HEK293 (cell line): ENCODE measurements at regions of chrX and their contacts with region 1.

Region 1: DNA sequence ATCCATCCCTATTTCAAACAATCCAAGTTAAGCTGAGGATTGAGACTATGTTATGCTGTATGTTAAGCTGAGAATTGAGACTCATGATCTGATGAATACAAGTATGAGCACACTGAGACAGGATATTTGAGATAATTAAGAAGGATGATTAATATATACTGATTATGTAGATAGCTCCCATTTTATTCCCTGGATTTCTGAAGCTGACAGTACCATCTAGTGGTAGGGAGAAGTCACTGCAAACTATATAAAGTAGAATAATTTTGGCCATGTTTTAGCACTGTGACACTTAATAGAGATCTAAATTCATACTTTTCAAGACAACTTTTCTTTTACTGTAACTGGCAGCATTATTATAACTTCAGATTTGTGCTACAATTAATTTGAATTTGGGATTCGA is 63.8 kb upstream of the HPRT1 start:
- H3K4me3 ChIP-seq: no peak overlapping the region
- H3K27ac ChIP-seq: no peak overlapping the region
- H3K4me1 ChIP-seq: no peaks in the 10 kb centered on the region
- CTCF ChIP-seq: peak; percentile 34; the same call in 1 of the 2 replicates

Region 2: DNA sequence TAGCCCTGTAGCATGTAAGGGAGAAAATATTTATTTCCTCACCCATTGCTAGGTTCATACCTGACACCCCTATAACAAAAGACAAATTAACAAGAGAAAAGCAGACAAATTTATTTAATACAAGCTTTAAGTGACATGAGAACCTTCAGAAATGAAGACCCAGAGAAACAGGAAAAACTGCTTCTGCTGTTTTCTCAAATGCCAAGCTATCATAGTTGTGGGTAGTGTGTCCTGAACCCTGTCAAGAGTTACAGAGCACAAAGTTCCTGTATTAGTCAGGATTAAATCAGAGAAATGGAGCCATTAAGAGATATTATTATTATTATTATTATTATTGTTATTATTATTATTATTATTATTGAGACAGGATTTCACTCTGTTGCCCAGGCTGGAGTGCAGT is 141.7 kb before region 1 on chrX:
- CTCF ChIA-PET with region 1: interaction called, 12 read pairs
- POLR2A ChIA-PET with region 1: no interaction called
- H3K4me3 ChIP-seq: no peak overlapping the region
- H3K27ac ChIP-seq: no peak overlapping the region
- H3K4me1 ChIP-seq: no peaks in the 10 kb centered on the region
- CTCF ChIP-seq: no peak

Region 3: DNA sequence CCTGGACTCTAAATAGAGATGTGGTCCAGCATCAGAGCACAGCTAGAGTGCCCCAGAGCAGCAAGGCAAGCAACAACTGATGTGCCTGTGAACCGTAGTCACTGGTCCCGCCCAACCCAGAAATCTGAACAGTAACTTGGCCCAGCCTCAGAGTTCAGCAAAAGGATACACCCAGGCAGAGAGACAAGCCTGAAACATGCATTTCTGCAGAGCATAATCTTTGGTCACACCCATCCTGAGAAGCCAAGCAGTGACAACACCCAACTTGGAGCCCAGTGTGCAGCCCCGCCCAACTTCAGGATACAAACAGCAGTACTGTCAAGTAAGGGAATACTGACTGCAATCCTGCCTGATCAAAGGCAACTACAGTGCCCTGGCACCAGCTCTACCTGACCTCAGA is 80.3 kb before region 1 on chrX:
- CTCF ChIA-PET with region 1: no interaction called
- POLR2A ChIA-PET with region 1: no interaction called
- H3K4me3 ChIP-seq: no peak overlapping the region
- H3K27ac ChIP-seq: no peak overlapping the region
- H3K4me1 ChIP-seq: no peaks in the 10 kb centered on the region
- CTCF ChIP-seq: no peak

Region 4: GRCh38 chrX:134377537-134377936 is 18.6 kb before region 1 on chrX:
- CTCF ChIA-PET with region 1: interaction called, 24 read pairs
- POLR2A ChIA-PET with region 1: no interaction called
- H3K4me3 ChIP-seq: no peak overlapping the region
- H3K27ac ChIP-seq: no peak overlapping the region
- H3K4me1 ChIP-seq: no peaks in the 10 kb centered on the region
- CTCF ChIP-seq: no peak

Region 5: GRCh38 chrX:134382816-134383215 is 13.4 kb before region 1 on chrX:
- CTCF ChIA-PET with region 1: interaction called, 41 read pairs
- POLR2A ChIA-PET with region 1: no interaction called
- H3K4me3 ChIP-seq: no peak overlapping the region
- H3K27ac ChIP-seq: no peak overlapping the region
- H3K4me1 ChIP-seq: no peaks in the 10 kb centered on the region
- CTCF ChIP-seq: no peak

Region 6: DNA sequence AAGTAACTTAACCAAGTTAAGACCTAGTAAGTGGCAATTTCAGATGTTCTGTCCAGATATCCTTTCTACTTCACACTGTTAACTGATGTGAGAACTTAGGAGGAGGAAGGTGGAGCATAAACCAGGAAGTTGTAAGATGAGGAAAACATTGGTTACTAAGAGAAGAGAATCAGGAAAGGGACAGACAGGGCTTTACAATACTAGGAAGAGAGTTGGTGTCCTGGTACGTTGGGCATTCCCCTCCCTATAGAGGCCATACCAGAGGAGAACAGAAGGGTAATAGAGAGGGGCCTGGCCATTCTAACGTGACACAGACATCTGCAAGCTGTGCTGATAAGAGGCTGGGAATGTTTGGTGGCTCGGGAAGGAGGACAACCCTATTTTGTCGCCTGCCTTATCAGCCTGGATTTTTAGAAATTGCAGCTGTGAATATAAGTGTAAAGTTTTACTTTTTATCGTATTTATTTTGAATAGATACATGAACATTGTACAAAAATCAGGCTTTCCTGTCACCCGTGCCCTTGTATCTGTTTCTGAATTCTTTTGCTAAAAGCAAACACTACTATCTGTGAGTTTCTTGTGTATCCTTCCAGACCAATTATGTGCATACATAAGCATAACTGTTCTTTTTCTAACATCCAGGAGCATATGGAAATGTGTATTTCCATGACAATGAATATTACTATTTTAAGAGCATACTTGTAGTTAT is 10.3 kb after region 1 on chrX:
- CTCF ChIA-PET with region 1: interaction called, 19 read pairs
- POLR2A ChIA-PET with region 1: no interaction called
- H3K4me3 ChIP-seq: no peak overlapping the region
- H3K27ac ChIP-seq: no peak overlapping the region
- H3K4me1 ChIP-seq: no peaks in the 10 kb centered on the region
- CTCF ChIP-seq: no peak

Region 7: GRCh38 chrX:134807039-134807731 is 411.0 kb after region 1 on chrX:
- CTCF ChIA-PET with region 1: no interaction called
- POLR2A ChIA-PET with region 1: no interaction called
- H3K4me3 ChIP-seq: peak overlapping the region; percentile 73
- H3K27ac ChIP-seq: peak overlapping the region; percentile 44; the same call in 1 of the 2 replicates
- H3K4me1 ChIP-seq: no peaks in the 10 kb centered on the region
- CTCF ChIP-seq: no peak